H1 (cell line): ENCODE measurements at regions of chr1 and their contacts with region 1.

Region 1: GRCh38 chr1:205061665-205062069 is 18.7 kb downstream of the CNTN2 start:
- DNase-seq: peak; percentile 67 to 99
- H3K4me3 ChIP-seq: no peak overlapping the region
- H3K27ac ChIP-seq: no peak overlapping the region
- H3K4me1 ChIP-seq: peaks cover 0 to 4% (median 2%) of the 10 kb centered on the region in 4 experiments; a peak in 4 of 7 replicates
- H3K27me3 ChIP-seq: no peaks in the 10 kb centered on the region
- CTCF ChIP-seq: peak; percentile 84 to 96 (median 95)
- EP300 ChIP-seq: no peak
- POLR2A ChIP-seq: no peak
- RAD21 ChIP-seq: peak; percentile 94 to 98

Region 2: DNA sequence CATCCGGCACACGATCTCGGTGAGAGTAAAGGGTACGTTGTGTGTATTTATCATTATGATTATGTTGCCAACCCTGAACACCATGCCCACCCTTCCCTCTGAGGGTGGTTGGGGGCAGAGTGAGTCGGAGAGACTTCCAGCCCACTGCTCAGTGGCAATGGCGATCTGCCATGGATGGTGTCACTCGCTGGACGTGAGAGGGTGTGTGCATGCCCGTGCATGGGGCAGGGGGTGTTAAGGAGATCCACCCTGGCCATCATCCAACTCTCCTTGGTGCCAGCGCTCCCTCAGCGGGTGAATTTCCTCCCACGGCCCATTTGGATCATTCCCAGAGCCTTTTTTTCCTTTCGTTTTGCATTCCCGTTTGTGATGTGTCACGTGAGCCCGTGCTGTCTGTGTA is 92.7 kb before region 1 on chr1:
- CTCF ChIA-PET with region 1: interaction called, 1,336 read pairs
- POLR2A ChIA-PET with region 1: no interaction called
- DNase-seq: no peak
- H3K4me3 ChIP-seq: no peak overlapping the region
- H3K27ac ChIP-seq: no peak overlapping the region
- H3K4me1 ChIP-seq: no peaks in the 10 kb centered on the region
- H3K27me3 ChIP-seq: no peaks in the 10 kb centered on the region
- CTCF ChIP-seq: no peak
- EP300 ChIP-seq: no peak
- POLR2A ChIP-seq: no peak
- RAD21 ChIP-seq: no peak

Region 3: GRCh38 chr1:205013683-205014367 is 47.8 kb before region 1 on chr1:
- CTCF ChIA-PET with region 1: interaction called, 33 read pairs
- POLR2A ChIA-PET with region 1: no interaction called
- DNase-seq: no peak
- H3K4me3 ChIP-seq: no peak overlapping the region
- H3K27ac ChIP-seq: no peak overlapping the region
- H3K4me1 ChIP-seq: peaks cover 0 to 21% (median 7%) of the 10 kb centered on the region in 4 experiments; a peak in 5 of 7 replicates
- H3K27me3 ChIP-seq: no peaks in the 10 kb centered on the region
- CTCF ChIP-seq: no peak
- EP300 ChIP-seq: no peak
- POLR2A ChIP-seq: no peak
- RAD21 ChIP-seq: no peak

Region 4: GRCh38 chr1:205032508-205032907 is 29.2 kb before region 1 on chr1:
- CTCF ChIA-PET with region 1: interaction called, 71 read pairs
- POLR2A ChIA-PET with region 1: no interaction called
- DNase-seq: no peak
- H3K4me3 ChIP-seq: no peak overlapping the region
- H3K27ac ChIP-seq: no peak overlapping the region
- H3K4me1 ChIP-seq: peaks cover 0 to 7% (median 3%) of the 10 kb centered on the region in 4 experiments; a peak in 4 of 7 replicates
- H3K27me3 ChIP-seq: no peaks in the 10 kb centered on the region
- CTCF ChIP-seq: no peak
- EP300 ChIP-seq: no peak
- POLR2A ChIP-seq: no peak
- RAD21 ChIP-seq: no peak

Region 5: GRCh38 chr1:205048382-205048781 is 13.3 kb before region 1 on chr1:
- CTCF ChIA-PET with region 1: interaction called, 102 read pairs
- POLR2A ChIA-PET with region 1: no interaction called
- DNase-seq: no peak
- H3K4me3 ChIP-seq: no peak overlapping the region
- H3K27ac ChIP-seq: no peak overlapping the region
- H3K4me1 ChIP-seq: peaks cover 13 to 26% (median 16%) of the 10 kb centered on the region in 4 experiments
- H3K27me3 ChIP-seq: peaks cover 0 to 12% (median 8%) of the 10 kb centered on the region in 4 experiments; a peak in 5 of 7 replicates
- CTCF ChIP-seq: no peak
- EP300 ChIP-seq: no peak
- POLR2A ChIP-seq: no peak
- RAD21 ChIP-seq: no peak

Region 6: DNA sequence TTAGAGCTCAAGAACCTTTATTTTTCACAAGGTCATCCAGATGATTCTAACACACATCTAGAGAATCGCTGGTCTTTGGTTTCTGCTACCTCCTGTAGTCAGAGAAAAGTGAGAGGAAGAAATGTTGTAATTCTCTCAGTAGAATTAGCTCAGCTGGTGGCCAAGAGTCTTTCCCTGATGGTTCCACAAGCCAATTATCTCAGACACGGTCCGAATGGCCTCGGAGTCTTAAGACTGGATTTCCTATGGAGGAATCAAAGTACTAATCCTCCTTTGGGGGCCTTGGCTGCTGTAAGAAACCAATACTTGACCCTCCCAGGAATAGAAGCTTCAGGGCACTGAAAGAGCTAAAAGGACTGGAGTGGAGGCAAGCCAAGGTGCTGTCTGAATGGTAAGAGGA is 20.8 kb after region 1 on chr1:
- CTCF ChIA-PET with region 1: interaction called, 113 read pairs
- POLR2A ChIA-PET with region 1: no interaction called
- DNase-seq: no peak
- H3K4me3 ChIP-seq: no peak overlapping the region
- H3K27ac ChIP-seq: no peak overlapping the region
- H3K4me1 ChIP-seq: no peaks in the 10 kb centered on the region
- H3K27me3 ChIP-seq: no peaks in the 10 kb centered on the region
- CTCF ChIP-seq: no peak
- EP300 ChIP-seq: no peak
- POLR2A ChIP-seq: no peak
- RAD21 ChIP-seq: no peak